OCI-LY7 (cell line): ENCODE measurements at regions of chr5 and their contacts with region 1.

Region 1: DNA sequence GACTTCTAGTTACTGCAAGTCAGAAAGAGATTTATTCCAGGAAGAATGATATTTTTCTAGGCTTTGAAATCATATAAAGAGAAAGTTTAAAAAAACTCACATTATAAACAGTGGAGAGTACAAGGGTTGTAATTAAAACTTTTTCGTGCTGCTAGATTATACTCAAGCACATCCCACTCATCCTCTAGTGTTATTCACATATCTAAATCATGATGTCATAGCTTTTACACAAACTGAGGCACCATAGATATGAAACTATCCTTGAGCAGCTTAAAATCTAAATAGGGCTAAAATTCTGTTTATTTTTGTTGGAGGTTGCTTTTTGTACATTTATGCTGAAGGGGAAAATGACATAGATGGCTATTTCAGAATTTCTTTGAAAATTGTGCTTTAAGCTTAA is 30.0 kb downstream of the TENT2 start:
- DNase-seq: no peak
- H3K4me3 ChIP-seq: no peak overlapping the region
- H3K27ac ChIP-seq: no peak overlapping the region
- H3K4me1 ChIP-seq: no peaks in the 10 kb centered on the region
- CTCF ChIP-seq: no peak

Region 2: DNA sequence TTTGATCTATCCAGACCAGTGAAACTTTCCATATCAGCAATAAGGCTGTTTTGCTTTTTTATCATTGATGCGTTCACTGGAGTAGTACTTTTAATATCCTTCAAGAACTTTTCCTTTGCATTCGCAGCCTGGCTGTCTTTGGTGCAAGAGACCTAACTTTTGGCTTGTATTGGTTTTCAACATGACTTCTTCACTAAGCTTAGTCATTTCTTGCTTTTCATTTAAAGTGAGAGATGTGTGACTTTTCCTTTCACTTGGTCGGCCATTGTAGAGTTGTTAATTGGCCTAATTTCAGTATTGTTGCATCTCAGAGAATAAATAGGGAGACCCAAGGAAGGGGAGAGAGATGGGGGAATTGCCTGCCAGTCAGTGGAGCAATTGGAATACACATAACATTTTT is 21.0 kb after region 1 on chr5:
- CTCF ChIA-PET with region 1: no interaction called
- POLR2A ChIA-PET with region 1: interaction called, 16 read pairs
- intact Hi-C with region 1: no loop called
- DNase-seq: no peak
- H3K4me3 ChIP-seq: no peak overlapping the region
- H3K27ac ChIP-seq: no peak overlapping the region
- H3K4me1 ChIP-seq: no peaks in the 10 kb centered on the region
- CTCF ChIP-seq: no peak